GM13977 (cell line): ENCODE measurements at regions of chr4 and their contacts with region 1.

Region 1: DNA sequence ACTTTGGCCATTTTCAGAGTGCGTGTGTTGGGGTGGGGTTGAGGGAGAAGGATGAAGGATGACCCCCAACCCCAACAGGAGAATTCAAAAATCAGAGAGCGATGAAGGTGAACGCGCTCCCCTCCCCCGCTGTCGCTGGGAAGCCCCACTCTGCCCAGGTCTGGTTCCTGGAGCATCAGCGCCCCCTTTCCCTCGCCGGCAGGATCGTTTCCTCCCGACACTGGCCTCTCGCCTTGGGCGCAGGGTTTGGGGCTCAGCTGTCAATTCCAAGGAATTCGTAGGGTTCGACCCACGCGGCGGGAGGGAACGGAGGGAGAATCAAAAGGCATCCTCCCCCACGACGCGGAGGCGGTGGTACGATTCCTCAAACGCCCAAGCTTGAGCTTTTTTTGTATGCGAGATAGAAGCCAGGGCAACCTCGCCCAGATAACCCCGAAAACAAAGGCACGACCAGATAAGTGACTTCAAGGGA is 1.0 kb upstream of the PDGFRA start:
- DNase-seq: peak; percentile 80
- CTCF ChIP-seq: peak; percentile 74

Region 2: GRCh38 chr4:53929955-53930798 is 297.9 kb before region 1 on chr4:
- in situ Hi-C with region 1: loop called (anchors 10 kb)
- DNase-seq: peak; percentile 63
- CTCF ChIP-seq: peak; percentile 85

Region 3: GRCh38 chr4:54626113-54626512 is 398.0 kb after region 1 on chr4:
- in situ Hi-C with region 1: no loop called
- DNase-seq: no peak
- CTCF ChIP-seq: no peak

Region 4: GRCh38 chr4:55409468-55410171 is 1181.5 kb after region 1 on chr4:
- in situ Hi-C with region 1: no loop called
- DNase-seq: no peak
- CTCF ChIP-seq: peak; percentile 58